Sigmoid colon (tissue), 7 donors: ENCODE measurements at regions of chrX and their contacts with region 1.

Region 1: DNA sequence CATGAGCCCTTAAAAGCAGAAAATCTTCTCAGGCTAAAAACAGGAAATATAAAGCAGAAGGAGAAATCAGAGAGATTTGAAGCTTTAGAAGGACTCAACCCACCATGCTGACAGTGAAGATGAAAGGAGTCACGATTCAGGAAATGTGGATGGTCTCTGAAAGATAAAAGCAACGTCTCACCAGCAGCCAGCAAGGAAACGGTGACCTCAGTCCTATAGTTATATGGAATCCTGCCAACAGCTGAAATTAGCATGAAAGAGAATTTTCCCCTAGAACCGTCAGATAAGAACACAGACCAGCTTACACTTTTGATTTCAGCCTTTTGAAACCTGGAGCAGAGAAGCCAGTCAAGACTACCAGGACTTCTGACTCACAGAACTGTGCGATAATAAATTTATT is 715.7 kb upstream of the HTR2C start:
- DNase-seq: no peak
- H3K4me3 ChIP-seq: no peak overlapping the region
- H3K27ac ChIP-seq: no peak overlapping the region
- H3K4me1 ChIP-seq: no peaks in the 10 kb centered on the region
- H3K27me3 ChIP-seq: no peaks in the 10 kb centered on the region
- CTCF ChIP-seq: no peak
- EP300 ChIP-seq: no peak
- POLR2A ChIP-seq: no peak

Region 2: DNA sequence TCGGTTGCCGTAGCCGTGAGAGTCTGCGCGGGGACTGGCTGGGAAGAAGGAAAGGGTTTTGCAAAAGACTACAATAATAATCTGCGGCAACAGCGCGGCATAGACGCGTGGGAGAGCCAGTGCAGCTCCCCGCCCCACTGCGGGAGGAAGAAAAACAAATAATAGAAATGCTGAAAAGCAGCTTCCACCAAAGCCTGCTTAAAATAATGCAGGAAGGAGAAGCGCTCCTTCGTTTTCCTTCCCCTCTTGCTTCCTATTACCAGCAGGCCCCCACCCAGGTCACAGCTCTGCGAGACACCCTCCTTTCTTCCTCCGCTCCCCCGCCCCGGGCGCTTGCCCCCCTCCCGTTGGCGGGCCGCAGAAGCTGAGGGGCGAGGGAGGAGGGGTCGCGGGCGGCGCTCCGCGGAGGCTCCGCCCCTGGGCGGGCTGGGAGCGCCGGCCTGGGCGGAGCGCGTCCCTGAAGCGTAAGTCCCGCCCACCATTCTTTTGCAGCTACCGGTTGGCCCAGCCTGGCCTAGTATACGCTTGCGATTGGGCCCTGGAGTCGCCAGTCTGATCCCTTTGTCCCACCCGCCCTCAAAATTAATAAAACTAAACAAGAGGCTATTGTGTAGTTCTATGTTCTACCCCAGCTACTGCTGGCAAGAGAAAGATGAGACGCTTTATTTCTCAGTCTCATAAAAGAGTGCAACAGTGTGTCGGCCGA is 1026.9 kb before region 1 on chrX:
- intact Hi-C with region 1: no loop called
- DNase-seq: peak; percentile 93
- H3K4me3 ChIP-seq: peak overlapping the region; percentile 52 to 64 (median 62)
- H3K27ac ChIP-seq: peak overlapping the region; percentile 80 to 89 (median 83)
- H3K4me1 ChIP-seq: peaks cover 0 to 9% (median 4%) of the 10 kb centered on the region in 4 donors
- H3K27me3 ChIP-seq: no peaks in the 10 kb centered on the region
- CTCF ChIP-seq: no peak
- EP300 ChIP-seq: no peak
- POLR2A ChIP-seq: no peak

Region 3: GRCh38 chrX:113802837-113803236 is 65.3 kb before region 1 on chrX:
- intact Hi-C with region 1: loop called (anchors 10 kb)
- DNase-seq: no peak
- H3K4me3 ChIP-seq: no peak overlapping the region
- H3K27ac ChIP-seq: no peak overlapping the region
- H3K4me1 ChIP-seq: no peaks in the 10 kb centered on the region
- H3K27me3 ChIP-seq: peaks cover 0 to 4% (median 0%) of the 10 kb centered on the region in 3 donors
- CTCF ChIP-seq: no peak
- EP300 ChIP-seq: no peak
- POLR2A ChIP-seq: no peak